Activated CD8-positive, alpha-beta memory T cell treated with anti-CD3 and anti-CD28 coated beads, Interleukin-2, amount 10 ng/mL, durations not matched to agents 7 days and 5 days (primary cell): ENCODE measurements at regions of chr7 and their contacts with region 1.

Region 1: DNA sequence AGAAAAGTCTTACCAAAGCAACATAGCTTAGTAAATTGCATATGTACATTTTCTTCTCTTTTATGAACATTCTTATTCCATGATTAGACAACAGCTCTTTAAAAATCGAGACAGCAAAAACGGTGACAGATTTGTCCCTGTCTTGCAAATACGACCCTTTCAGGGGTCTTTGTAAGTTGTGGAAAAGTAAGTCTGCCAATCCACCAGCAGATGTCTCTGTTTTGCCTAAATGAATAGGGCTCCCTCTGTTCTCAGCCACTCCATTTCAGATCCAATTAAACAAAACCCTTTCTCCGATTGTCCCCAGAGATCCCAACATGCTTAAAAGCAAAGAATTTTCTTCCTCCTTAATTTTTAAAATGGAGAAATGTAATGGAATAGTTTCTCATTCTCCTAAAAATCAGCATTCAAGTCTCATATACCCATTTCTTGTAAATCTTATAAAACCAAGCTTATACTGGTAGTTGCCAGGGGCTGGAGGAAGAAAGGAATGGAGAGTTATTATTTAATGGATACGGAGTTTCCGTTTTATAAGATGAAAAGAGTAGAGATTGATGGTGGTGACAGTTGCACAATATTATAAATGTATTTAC is 61.0 kb upstream of the NFE2L3 start:
- DNase-seq: no peak
- ATAC-seq: peak; percentile 66
- H3K4me3 Mint-ChIP-seq: peak overlapping the region; percentile 34
- H3K27ac Mint-ChIP-seq: peak overlapping the region; percentile 69
- H3K4me1 Mint-ChIP-seq: peaks cover 23% of the 10 kb centered on the region
- H3K27me3 Mint-ChIP-seq: no peaks in the 10 kb centered on the region

Region 2: DNA sequence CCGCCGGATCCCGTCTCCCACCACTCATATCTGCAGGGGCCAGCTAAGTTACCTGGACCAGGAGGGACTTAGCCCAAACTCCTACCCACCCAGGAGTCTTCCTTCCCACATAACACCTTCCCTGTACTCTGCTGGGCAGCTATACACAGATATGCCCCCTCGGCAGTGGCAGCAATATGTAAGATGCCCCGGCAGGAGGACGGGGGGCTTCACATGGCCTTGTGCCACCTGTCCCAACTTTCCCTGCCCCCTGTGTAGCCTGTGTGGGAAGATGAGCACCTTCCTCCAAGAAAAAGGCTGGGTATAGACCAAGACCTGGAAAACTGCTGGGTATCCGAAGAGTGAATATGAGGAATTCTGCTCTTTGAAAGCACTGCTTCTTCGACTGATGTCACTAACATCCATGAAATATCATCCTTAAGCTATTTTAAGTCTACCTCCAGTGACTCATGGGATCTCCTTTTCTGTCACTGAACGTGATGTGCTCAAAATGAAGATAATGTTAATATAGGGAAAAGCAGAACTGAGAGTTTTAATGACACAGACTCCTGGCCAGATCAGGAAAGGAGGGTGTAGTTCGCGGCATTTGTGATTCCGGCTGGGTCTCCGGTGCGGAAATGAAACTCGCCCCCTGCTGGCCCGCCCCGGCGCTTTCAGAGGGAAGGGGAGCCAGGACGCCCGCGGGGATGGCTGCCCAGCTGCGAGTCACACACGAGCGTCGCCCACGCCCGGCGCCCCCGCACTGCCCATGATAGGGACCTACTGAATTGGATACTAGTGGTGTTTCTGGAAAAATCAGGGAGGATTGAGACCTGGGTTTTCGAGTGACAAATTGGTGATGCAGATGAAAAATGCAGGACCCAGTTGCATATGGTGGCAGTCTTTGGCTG is 195.9 kb before region 1 on chr7:
- CTCF ChIA-PET with region 1: interaction called, 26 read pairs
- DNase-seq: peak; percentile 71
- ATAC-seq: peak; percentile 72
- H3K4me3 Mint-ChIP-seq: peak overlapping the region; percentile 34
- H3K27ac Mint-ChIP-seq: no peak overlapping the region
- H3K4me1 Mint-ChIP-seq: peaks cover 30% of the 10 kb centered on the region
- H3K27me3 Mint-ChIP-seq: peaks cover 28% of the 10 kb centered on the region

Region 3: DNA sequence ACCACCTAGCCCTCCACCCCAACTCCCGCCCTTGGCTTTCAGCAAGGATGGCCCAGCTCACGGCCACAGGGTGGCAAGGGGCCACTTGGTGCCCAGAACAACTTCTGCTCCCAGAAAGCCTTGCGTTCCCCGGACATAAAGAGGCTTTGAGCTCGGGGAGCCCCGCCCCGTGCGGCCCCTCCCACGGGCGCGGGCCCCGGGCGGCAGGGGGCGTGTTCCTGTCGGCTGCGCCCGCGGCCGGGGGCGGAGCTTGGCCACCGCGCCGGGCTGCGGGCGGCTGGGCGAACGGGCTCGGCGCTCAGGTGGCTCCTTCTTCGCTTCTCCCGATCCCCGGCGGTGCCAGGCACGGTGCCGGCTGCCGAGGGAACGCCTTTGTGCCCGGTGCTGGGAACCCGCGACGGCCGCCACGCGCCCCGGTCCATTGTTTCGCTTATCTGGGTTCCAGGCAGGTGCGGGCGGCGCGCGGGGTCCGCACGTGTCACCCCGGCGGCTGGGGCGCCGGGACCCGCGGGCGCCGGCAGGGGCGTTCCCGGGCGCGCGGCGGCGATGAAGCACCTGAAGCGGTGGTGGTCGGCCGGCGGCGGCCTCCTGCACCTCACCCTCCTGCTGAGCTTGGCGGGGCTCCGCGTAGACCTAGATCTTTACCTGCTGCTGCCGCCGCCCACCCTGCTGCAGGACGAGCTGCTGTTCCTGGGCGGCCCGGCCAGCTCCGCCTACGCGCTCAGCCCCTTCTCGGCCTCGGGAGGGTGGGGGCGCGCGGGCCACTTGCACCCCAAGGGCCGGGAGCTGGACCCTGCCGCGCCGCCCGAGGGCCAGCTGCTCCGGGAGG is 61.1 kb after region 1 on chr7 and contains the start of gene NFE2L3:
- CTCF ChIA-PET with region 1: interaction called, 14 read pairs
- DNase-seq: peak; percentile 89
- ATAC-seq: peak; percentile 77
- H3K4me3 Mint-ChIP-seq: peak within 1 kb of the TSS; percentile 89
- H3K27ac Mint-ChIP-seq: peak within 1 kb of the TSS; percentile 99
- H3K4me1 Mint-ChIP-seq: peaks cover 52% of the 10 kb centered on the region
- H3K27me3 Mint-ChIP-seq: no peaks in the 10 kb centered on the region
- total RNA-seq, gene NFE2L3: 20.1 to 44.4 TPM

Region 4: GRCh38 chr7:26187380-26188205 is 96.6 kb after region 1 on chr7:
- CTCF ChIA-PET with region 1: interaction called, 34 read pairs
- DNase-seq: no peak
- ATAC-seq: peak; percentile 15
- H3K4me3 Mint-ChIP-seq: no peak overlapping the region
- H3K27ac Mint-ChIP-seq: peak overlapping the region; percentile 81
- H3K4me1 Mint-ChIP-seq: peaks cover 74% of the 10 kb centered on the region
- H3K27me3 Mint-ChIP-seq: no peaks in the 10 kb centered on the region

Region 5: GRCh38 chr7:26200444-26201246 is 109.6 kb after region 1 on chr7 and contains the start of gene HNRNPA2B1:
- CTCF ChIA-PET with region 1: interaction called, 29 read pairs
- DNase-seq: peak; percentile 98
- ATAC-seq: peak; percentile 76
- H3K4me3 Mint-ChIP-seq: peak within 1 kb of the TSS; percentile 100
- H3K27ac Mint-ChIP-seq: peak within 1 kb of the TSS; percentile 99
- H3K4me1 Mint-ChIP-seq: peaks cover 35% of the 10 kb centered on the region
- H3K27me3 Mint-ChIP-seq: peaks cover 8% of the 10 kb centered on the region
- total RNA-seq, gene HNRNPA2B1: 768 to 857 TPM

Region 6: DNA sequence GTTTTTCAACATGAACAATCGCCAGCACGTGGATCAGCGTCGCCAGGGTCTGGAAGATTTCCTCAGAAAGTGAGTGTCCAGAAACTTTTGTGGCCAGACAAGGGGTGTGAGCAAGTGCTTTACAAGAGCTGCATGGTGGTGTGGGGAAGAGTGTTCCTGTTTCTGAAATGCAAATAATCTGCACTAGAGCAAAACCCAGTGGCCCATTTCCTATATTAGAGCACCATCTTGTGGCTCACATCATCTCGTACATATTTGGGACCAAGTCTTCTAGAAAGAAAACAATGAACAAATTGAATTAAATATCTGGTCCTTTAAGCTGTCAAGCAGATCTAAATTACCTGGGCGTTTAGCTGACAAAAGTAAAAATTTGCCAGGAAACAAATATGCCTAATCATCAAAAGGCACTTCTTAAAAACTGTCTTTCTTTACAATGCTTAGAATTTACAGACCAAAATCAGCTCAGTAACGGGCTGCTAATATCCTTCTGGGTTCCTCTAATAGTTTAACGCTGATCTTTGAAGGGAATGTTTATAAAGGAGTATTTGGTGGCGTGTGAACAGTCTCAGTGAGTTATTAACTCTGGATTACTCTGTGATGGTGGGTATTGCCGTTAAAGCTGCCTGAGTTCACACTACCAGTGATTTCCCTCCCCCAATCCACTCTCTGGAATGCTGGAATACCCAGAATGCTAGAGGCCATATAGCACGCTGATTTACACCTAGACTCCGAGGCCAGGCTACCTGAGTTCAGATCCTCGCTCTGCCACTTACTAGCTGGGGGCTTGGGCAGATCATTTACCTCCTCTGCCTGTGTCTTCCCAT is 274.3 kb after region 1 on chr7:
- CTCF ChIA-PET with region 1: interaction called, 35 read pairs
- DNase-seq: peak; percentile 68
- ATAC-seq: peak; percentile 76
- H3K4me3 Mint-ChIP-seq: no peak overlapping the region
- H3K27ac Mint-ChIP-seq: no peak overlapping the region
- H3K4me1 Mint-ChIP-seq: peaks cover 20% of the 10 kb centered on the region
- H3K27me3 Mint-ChIP-seq: no peaks in the 10 kb centered on the region